ENCODE measurements at regions of chr7 and their contacts with region 1.

Region 1: GRCh38 chr7:130069978-130070860 is at the start of gene KLHDC10:
- DNase-seq: peak; percentile 97
- ATAC-seq: peak; percentile 96
- H3K4me3 Mint-ChIP-seq: peak within 1 kb of the TSS; percentile 86
- H3K27ac Mint-ChIP-seq: peak within 1 kb of the TSS; percentile 80
- H3K4me1 Mint-ChIP-seq: peaks cover 29% of the 10 kb centered on the region
- H3K27me3 Mint-ChIP-seq: no peaks in the 10 kb centered on the region
- total RNA-seq, gene KLHDC10: 14.2 to 14.6 TPM

Region 2: GRCh38 chr7:130084037-130084875 is 14.0 kb after region 1 on chr7:
- CTCF ChIA-PET with region 1: interaction called, 16 read pairs
- DNase-seq: no peak
- ATAC-seq: no peak
- H3K4me3 Mint-ChIP-seq: no peak overlapping the region
- H3K27ac Mint-ChIP-seq: no peak overlapping the region
- H3K4me1 Mint-ChIP-seq: peaks cover 5% of the 10 kb centered on the region
- H3K27me3 Mint-ChIP-seq: no peaks in the 10 kb centered on the region

Region 3: GRCh38 chr7:130154501-130155317 is 84.5 kb after region 1 on chr7:
- CTCF ChIA-PET with region 1: no interaction called
- DNase-seq: no peak
- ATAC-seq: no peak
- H3K4me3 Mint-ChIP-seq: no peak overlapping the region
- H3K27ac Mint-ChIP-seq: no peak overlapping the region
- H3K4me1 Mint-ChIP-seq: no peaks in the 10 kb centered on the region
- H3K27me3 Mint-ChIP-seq: no peaks in the 10 kb centered on the region

Region 4: GRCh38 chr7:130758429-130759056 is 688.3 kb after region 1 on chr7:
- CTCF ChIA-PET with region 1: interaction called, 25 read pairs
- DNase-seq: no peak
- ATAC-seq: no peak
- H3K4me3 Mint-ChIP-seq: no peak overlapping the region
- H3K27ac Mint-ChIP-seq: no peak overlapping the region
- H3K4me1 Mint-ChIP-seq: no peaks in the 10 kb centered on the region
- H3K27me3 Mint-ChIP-seq: peaks cover 21% of the 10 kb centered on the region

Region 5: GRCh38 chr7:130831817-130832481 is 761.7 kb after region 1 on chr7:
- CTCF ChIA-PET with region 1: interaction called, 18 read pairs
- DNase-seq: no peak
- ATAC-seq: no peak
- H3K4me3 Mint-ChIP-seq: no peak overlapping the region
- H3K27ac Mint-ChIP-seq: no peak overlapping the region
- H3K4me1 Mint-ChIP-seq: no peaks in the 10 kb centered on the region
- H3K27me3 Mint-ChIP-seq: peaks cover 27% of the 10 kb centered on the region